Activated CD8-positive, alpha-beta T cell treated with anti-CD3 and anti-CD28 coated beads, Interleukin-2, amount 10 ng/mL, durations not matched to agents 7 days and 5 days (primary cell): ENCODE measurements at regions of chr18 and their contacts with region 1.

Region 1: GRCh38 chr18:32072321-32072720 is 19.4 kb upstream of the RNF138 start:
- DNase-seq: peak; percentile 35
- ATAC-seq: no peak
- H3K4me3 Mint-ChIP-seq: no peak overlapping the region
- H3K27ac Mint-ChIP-seq: no peak overlapping the region
- H3K4me1 Mint-ChIP-seq: peaks cover 19% of the 10 kb centered on the region
- H3K27me3 Mint-ChIP-seq: no peaks in the 10 kb centered on the region

Region 2: DNA sequence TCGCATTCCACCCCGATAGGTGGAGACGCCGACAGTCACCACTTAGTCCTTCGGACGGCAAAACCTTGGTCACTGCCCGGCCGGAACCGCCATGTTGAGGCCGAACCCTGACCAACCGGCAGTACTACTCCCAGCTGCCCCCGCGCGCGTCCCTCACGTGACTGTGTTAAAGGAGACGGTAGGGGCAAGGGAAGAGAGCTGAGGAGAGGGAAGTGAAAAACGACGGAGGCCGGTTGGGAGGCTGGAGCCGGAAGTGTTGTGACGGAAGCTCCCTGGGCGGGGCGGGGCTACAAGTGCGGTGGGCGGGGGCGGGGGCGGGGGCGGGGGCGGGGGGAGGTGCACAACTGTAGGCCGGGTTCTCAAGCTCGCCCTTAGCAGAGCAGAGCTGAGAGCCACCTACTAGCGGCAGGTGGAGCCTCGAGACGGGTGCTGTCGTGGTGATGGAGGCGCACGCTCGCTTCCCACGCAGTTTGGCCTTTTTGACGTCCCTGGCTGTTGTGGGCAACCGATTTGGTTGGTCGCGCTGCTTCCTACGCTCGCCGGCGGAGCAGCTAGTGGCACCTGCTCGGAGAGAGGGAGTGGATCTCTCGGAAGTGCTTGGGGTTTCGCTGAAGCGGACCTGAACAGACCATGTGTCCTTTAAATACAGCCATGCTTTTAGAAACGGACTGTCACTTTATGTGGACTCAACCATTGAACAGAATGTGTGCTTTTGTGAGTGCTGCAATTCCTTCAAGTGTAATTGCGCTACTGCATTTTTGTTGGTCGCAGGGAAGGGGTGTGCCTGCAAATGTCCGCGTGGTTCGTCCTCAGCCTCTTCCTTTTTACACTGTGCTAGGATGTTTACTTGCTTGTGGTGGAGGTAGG is 129.1 kb before region 1 on chr18 and contains the start of gene TRAPPC8:
- CTCF ChIA-PET with region 1: interaction called, 25 read pairs
- POLR2A ChIA-PET with region 1: interaction called, 3 read pairs
- DNase-seq: peak; percentile 95
- ATAC-seq: peak; percentile 93
- H3K4me3 Mint-ChIP-seq: peak within 1 kb of the TSS; percentile 95
- H3K27ac Mint-ChIP-seq: peak within 1 kb of the TSS; percentile 98
- H3K4me1 Mint-ChIP-seq: peaks cover 43% of the 10 kb centered on the region
- H3K27me3 Mint-ChIP-seq: no peaks in the 10 kb centered on the region
- total RNA-seq, gene TRAPPC8: 41.5 to 42.1 TPM

Region 3: DNA sequence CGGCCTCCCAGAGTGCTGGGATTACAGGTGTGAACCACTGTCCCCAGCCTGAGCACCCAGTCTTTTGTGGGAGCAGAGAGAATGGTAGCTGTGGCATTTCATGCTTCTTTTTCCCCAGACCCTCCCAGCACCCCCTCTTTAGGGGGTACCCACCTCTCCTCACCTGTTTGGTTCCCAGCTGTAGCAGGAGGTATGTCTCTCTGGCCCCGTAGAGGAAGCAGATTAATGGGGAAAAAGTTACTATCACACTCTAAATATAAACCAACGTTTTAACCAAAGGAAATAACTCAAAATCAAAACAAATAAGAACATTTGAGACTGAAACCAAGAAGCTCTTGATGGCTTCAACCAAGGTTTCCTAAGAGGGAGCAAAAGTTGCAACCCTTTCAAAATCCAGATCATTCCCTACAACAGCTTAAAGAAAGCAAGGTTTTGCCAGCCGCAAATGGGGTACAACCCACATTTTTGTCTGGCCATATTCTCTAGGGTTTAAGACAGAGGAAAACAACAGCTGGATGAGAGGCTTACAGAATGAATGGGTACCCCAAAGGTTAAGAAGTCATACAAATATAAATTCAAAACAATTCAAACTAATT is 45.7 kb before region 1 on chr18:
- CTCF ChIA-PET with region 1: interaction called, 21 read pairs
- POLR2A ChIA-PET with region 1: interaction called, 3 read pairs
- DNase-seq: no peak
- ATAC-seq: peak; percentile 66
- H3K4me3 Mint-ChIP-seq: peak overlapping the region; percentile 73
- H3K27ac Mint-ChIP-seq: peak overlapping the region; percentile 85
- H3K4me1 Mint-ChIP-seq: peaks cover 83% of the 10 kb centered on the region
- H3K27me3 Mint-ChIP-seq: no peaks in the 10 kb centered on the region

Region 4: DNA sequence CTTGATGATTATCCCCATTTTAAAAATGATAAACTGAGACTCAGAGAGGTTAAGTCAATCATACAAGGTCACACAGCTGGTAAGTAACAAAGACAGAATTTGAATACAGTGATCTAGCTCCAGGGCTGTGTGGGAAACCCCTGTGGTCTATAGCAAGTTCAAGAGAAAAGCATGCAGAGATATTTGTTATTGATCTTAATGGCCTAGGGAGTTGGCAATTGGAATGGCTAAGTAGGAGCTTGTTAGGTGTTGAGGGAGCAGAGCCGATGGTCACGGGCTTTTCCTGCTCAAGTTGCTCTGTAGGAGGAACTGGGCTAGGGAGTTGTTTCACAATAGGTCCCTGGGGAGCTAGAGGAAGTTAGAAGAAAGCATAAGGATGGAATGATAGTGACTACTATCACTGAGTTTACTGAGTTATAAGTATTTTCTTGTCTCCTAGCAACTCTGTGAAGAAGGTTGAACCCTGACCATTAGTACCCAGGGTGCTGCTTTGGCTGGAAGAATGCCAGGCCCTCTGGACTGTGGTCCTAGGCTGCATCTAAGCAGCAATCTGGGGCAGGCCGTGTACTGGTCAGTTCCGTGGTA is 23.7 kb before region 1 on chr18:
- CTCF ChIA-PET with region 1: interaction called, 27 read pairs
- POLR2A ChIA-PET with region 1: interaction called, 4 read pairs
- DNase-seq: peak; percentile 31
- ATAC-seq: peak; percentile 62
- H3K4me3 Mint-ChIP-seq: peak overlapping the region; percentile 17
- H3K27ac Mint-ChIP-seq: peak overlapping the region; percentile 85
- H3K4me1 Mint-ChIP-seq: peaks cover 47% of the 10 kb centered on the region
- H3K27me3 Mint-ChIP-seq: no peaks in the 10 kb centered on the region

Region 5: DNA sequence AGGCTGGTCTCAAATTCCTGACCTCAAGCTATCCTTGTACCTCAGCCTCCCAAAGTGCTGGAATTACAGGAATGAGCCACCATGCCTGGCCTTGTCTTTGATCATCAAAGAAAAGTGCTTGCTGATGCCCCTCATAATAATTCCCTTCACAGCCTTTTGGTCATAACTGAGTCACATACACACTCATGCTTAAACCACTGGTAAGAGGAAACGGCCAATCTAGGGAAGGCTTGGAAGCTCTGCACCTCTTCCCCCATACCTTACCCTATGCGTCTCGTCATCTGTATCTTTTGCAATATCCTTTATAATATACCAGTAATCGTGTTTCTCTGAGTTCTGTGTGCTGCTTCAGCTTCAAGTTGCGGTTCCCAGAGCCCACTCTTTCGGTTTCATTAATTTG is 14.5 kb after region 1 on chr18:
- CTCF ChIA-PET with region 1: interaction called, 39 read pairs
- POLR2A ChIA-PET with region 1: interaction called, 4 read pairs
- DNase-seq: no peak
- ATAC-seq: no peak
- H3K4me3 Mint-ChIP-seq: no peak overlapping the region
- H3K27ac Mint-ChIP-seq: no peak overlapping the region
- H3K4me1 Mint-ChIP-seq: peaks cover 53% of the 10 kb centered on the region
- H3K27me3 Mint-ChIP-seq: no peaks in the 10 kb centered on the region